PC-9 (cell line): ENCODE measurements at regions of chr13 and their contacts with region 1.

Region 1: GRCh38 chr13:113941571-113942191 is 32.2 kb downstream of the C13orf46 start:
- DNase-seq: peak; percentile 63 to 75
- H3K4me3 ChIP-seq: no peak overlapping the region
- H3K27ac ChIP-seq: no peak overlapping the region
- H3K4me1 ChIP-seq: peaks cover 10% of the 10 kb centered on the region
- H3K27me3 ChIP-seq: peaks cover 24% of the 10 kb centered on the region
- CTCF ChIP-seq: no peak

Region 2: DNA sequence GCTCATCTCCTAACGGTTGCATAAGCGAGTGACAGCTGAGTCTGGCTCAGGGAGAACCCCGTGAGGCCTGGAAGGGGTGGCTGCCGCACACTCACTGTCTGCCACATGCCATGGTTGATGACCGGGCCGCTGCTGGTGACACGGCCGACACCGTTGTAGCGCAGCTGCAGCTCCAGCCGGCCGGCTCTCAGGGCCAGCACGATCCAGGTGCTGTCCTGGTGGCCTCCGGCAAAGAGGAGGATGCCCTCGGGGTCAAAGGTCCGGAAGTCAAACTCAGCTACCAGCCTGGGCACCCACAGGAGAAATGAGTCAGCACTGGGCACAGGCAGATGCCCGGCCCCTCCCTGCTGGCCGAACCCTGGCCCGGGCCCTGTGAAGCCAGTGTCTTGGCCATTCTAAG is 109.5 kb before region 1 on chr13:
- CTCF ChIA-PET with region 1: no interaction called
- POLR2A ChIA-PET with region 1: interaction called, 3 read pairs
- intact Hi-C with region 1: loop called (anchors 5 kb)
- DNase-seq: peak; percentile 85 to 92
- H3K4me3 ChIP-seq: no peak overlapping the region
- H3K27ac ChIP-seq: no peak overlapping the region
- H3K4me1 ChIP-seq: peaks cover 43% of the 10 kb centered on the region
- H3K27me3 ChIP-seq: no peaks in the 10 kb centered on the region
- CTCF ChIP-seq: no peak

Region 3: DNA sequence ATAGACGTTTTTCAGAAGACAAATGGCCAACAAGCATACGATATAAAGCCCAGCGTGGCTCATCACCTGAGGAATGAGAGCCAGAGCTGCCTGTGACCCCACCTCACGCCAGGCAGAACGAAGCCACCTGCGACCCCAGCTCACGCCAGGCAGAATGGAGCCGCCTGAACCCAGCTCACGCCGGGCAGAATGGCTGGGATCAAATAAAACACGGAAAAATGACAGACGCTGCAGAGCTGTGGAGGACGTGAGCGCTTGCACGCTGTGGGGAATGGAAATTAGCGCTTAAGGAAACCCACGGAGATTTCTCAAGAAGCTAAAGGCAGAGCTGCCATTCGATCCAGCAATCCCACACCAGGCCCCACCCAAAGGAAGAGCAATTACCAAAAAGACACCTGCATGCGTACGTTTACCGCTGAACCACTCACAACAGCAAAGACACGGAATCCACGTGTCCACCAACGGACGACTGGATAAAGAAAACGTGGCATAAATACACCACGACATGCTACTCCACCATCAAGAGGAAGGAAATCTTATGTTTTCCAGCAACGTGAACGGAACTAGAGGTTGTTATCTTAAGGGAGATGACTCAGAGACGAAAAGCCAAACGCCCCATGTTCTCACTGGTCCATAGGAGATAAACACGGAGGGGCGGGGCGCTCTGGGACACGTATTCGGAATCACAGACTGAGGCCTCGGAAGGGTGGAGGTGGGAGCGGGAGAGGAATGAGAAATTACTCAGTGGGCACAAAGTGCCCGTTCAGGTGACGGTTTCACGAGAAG is 62.9 kb after region 1 on chr13:
- CTCF ChIA-PET with region 1: no interaction called
- POLR2A ChIA-PET with region 1: no interaction called
- intact Hi-C with region 1: no loop called
- DNase-seq: peak in 1 of 2 experiments; percentile 53
- H3K4me3 ChIP-seq: no peak overlapping the region
- H3K27ac ChIP-seq: no peak overlapping the region
- H3K4me1 ChIP-seq: no peaks in the 10 kb centered on the region
- H3K27me3 ChIP-seq: no peaks in the 10 kb centered on the region
- CTCF ChIP-seq: no peak